Esophagus muscularis mucosa (tissue), 4 donors: ENCODE measurements at regions of chr3 and their contacts with region 1.

Region 1: GRCh38 chr3:119293871-119294695 is at the start of gene ARHGAP31:
- DNase-seq: peak; percentile 93
- H3K4me3 ChIP-seq: peak within 1 kb of the TSS; percentile 75 to 90 (median 86)
- H3K27ac ChIP-seq: peak within 1 kb of the TSS; percentile 88 to 95 (median 94)
- H3K4me1 ChIP-seq: peaks cover 38 to 48% (median 45%) of the 10 kb centered on the region in 4 donors
- H3K27me3 ChIP-seq: no peaks in the 10 kb centered on the region
- CTCF ChIP-seq: no peak
- EP300 ChIP-seq: no peak
- POLR2A ChIP-seq: no peak
- total RNA-seq, gene ARHGAP31: 14.5 to 25.9 (median 23.1) TPM

Region 2: DNA sequence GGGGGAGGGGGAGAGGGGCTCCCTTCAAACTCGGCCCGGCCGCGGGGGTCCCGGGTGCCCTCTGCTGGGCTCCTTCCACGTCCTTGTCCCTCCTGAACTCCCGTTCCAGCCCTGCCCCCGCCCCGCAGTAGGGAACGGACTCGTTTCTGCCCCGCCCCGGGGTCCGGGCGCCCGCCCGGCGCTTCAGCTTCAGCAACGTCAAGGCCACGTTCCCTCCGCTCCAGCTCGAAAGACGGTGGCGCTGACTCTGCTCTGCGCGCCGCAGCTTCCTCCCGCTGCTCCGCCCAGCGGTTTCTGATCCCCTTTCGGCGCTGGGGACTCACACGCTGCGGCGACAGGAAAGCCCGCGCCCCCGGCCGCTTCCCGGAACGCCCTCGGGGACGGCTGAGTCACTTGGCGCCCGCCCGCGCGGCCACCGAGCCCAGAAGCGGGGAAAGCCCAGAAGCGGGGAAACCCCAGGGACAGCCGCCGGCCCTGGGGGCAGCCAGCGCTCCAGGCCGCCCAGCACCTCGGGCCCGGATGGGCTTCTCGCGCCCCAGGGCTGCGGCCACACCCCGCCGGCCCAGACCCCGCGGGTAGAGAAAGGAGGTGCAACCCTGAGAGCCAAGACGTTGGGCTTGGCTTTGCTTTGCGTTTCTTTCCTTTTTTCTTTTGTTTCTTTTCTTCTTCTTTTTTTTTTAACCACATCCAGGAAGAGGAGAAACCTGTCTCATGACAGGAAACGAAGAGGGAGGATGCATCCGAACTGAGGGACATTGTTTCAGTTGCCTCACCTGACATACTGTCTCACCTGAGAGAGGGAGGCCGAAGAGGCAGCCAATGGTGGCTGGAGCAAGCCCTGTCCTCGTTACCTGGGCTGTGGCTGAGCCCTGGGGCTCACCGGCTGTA is 29.0 kb after region 1 on chr3:
- intact Hi-C with region 1: loop called (anchors 2 kb)
- DNase-seq: peak; percentile 94
- H3K4me3 ChIP-seq: peak overlapping the region; percentile 61 to 79 (median 69)
- H3K27ac ChIP-seq: peak overlapping the region; percentile 87 to 96 (median 92)
- H3K4me1 ChIP-seq: peaks cover 22 to 28% (median 27%) of the 10 kb centered on the region in 4 donors
- H3K27me3 ChIP-seq: no peaks in the 10 kb centered on the region
- CTCF ChIP-seq: peak in 1 of 3 experiments; percentile 5
- EP300 ChIP-seq: no peak
- POLR2A ChIP-seq: no peak

Region 3: DNA sequence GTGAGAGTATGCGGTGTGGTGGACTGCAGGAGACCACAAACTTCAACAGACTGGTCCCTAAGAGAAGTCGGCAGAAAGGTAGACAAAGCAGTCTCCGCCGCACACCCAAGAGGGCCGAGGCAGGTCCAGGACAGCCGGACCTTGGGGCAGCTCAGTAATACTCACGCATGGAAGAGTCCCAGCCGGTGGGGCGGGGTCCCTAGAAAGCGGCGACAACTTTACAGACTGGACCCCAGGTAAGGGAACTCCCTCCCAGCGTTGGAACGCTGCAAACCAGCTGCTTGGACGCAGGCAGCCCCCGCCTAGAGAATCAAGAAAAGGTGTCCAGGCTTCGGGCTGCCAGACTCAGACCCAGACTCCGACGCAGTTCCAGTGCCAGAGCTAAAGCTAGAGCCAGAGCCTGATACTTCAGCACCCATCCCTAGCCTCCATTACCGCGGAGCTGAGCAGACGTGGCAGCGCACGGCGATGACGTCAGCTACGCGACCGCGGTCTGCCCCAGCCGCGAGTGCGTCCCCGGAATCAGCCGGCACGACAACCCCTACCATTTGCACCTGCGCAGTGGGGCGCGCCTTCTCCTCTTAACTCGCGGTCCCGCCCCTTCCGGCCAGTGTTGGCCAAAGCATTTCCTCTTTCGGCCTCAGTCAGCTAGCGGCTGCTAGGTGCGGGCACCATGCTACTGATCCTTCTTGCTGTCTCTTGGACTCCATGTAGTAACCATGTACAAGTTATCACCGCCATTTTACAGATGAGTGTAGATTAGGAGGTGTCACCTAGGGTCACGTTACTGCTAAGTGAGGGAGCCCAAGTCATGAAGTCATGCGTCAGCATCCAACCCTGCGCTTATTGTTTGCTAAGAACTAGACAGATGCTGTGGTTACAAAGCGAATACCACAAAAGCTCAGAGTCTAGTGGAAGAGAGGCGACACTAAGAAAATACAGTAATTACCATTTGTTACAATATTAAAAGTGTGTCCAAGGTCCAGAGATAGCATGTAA is 169.4 kb after region 1 on chr3 and contains the start of gene TMEM39A:
- intact Hi-C with region 1: loop called (anchors 10 kb)
- DNase-seq: peak; percentile 100
- H3K4me3 ChIP-seq: peak within 1 kb of the TSS; percentile 69 to 98 (median 80)
- H3K27ac ChIP-seq: peak within 1 kb of the TSS; percentile 80 to 87 (median 84)
- H3K4me1 ChIP-seq: peaks cover 25 to 50% (median 40%) of the 10 kb centered on the region in 4 donors
- H3K27me3 ChIP-seq: no peaks in the 10 kb centered on the region
- CTCF ChIP-seq: peak in 2 of 3 experiments; percentile 20 to 25
- EP300 ChIP-seq: no peak
- POLR2A ChIP-seq: peak; percentile 77
- total RNA-seq, gene TMEM39A: 10.0 to 34.3 (median 25.9) TPM